ENCODE measurements at regions of chr14 and their contacts with region 1.

Region 1: GRCh38 chr14:31172084-31172483 is 35.5 kb downstream of the HECTD1 start:
- DNase-seq: no peak
- ATAC-seq: no peak
- H3K4me3 ChIP-seq: no peak overlapping the region
- H3K4me3 Mint-ChIP-seq: no peak overlapping the region
- H3K27ac ChIP-seq: no peak overlapping the region
- H3K27ac Mint-ChIP-seq: no peak overlapping the region
- H3K4me1 ChIP-seq: no peaks in the 10 kb centered on the region
- H3K4me1 Mint-ChIP-seq: no peaks in the 10 kb centered on the region
- H3K27me3 ChIP-seq: no peaks in the 10 kb centered on the region
- H3K27me3 Mint-ChIP-seq: no peaks in the 10 kb centered on the region
- CTCF ChIP-seq: no peak

Region 2: GRCh38 chr14:31200702-31200990 is 28.6 kb after region 1 on chr14:
- CTCF ChIA-PET with region 1: no interaction called
- POLR2A ChIA-PET with region 1: no interaction called
- intact Hi-C with region 1: loop called in 1 of 2 experiments (anchors 2 kb)
- DNase-seq: no peak
- ATAC-seq: no peak
- H3K4me3 ChIP-seq: no peak overlapping the region
- H3K4me3 Mint-ChIP-seq: no peak overlapping the region
- H3K27ac ChIP-seq: no peak overlapping the region
- H3K27ac Mint-ChIP-seq: no peak overlapping the region
- H3K4me1 ChIP-seq: peaks cover 10% of the 10 kb centered on the region
- H3K4me1 Mint-ChIP-seq: peaks cover 81% of the 10 kb centered on the region
- H3K27me3 ChIP-seq: no peaks in the 10 kb centered on the region
- H3K27me3 Mint-ChIP-seq: no peaks in the 10 kb centered on the region
- CTCF ChIP-seq: no peak